Activated naive CD8-positive, alpha-beta T cell treated with anti-CD3 and anti-CD28 coated beads, Interleukin-2, amount 10 ng/mL, durations not matched to agents 7 days and 5 days (primary cell): ENCODE measurements at regions of chr3 and their contacts with region 1.

Region 1: DNA sequence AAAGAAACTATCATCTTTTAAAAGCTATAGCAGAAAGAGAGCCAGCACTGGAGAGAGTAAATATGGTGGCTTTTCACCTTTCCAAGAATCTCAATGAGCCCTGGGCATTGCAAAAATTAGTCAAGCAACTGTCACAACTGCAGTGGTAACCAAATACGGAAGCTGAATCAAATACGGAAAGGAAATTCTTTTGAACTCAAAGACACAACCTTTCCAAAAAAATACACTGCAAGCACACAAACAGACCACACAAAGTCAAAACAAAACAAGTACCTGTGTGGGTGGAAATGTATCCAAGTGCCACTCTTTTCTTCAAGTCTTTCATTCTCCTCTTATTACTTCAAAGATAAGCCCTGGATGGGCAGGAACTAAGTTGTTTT is 17.6 kb downstream of the VGLL4 start:
- DNase-seq: no peak
- ATAC-seq: peak; percentile 12
- H3K4me3 Mint-ChIP-seq: peak overlapping the region; percentile 66
- H3K27ac Mint-ChIP-seq: peak overlapping the region; percentile 78
- H3K4me1 Mint-ChIP-seq: peaks cover 54% of the 10 kb centered on the region
- H3K27me3 Mint-ChIP-seq: no peaks in the 10 kb centered on the region

Region 2: GRCh38 chr3:11410564-11410963 is 215.5 kb before region 1 on chr3:
- POLR2A ChIA-PET with region 1: no interaction called
- DNase-seq: no peak
- ATAC-seq: no peak
- H3K4me3 Mint-ChIP-seq: no peak overlapping the region
- H3K27ac Mint-ChIP-seq: no peak overlapping the region
- H3K4me1 Mint-ChIP-seq: no peaks in the 10 kb centered on the region
- H3K27me3 Mint-ChIP-seq: no peaks in the 10 kb centered on the region

Region 3: DNA sequence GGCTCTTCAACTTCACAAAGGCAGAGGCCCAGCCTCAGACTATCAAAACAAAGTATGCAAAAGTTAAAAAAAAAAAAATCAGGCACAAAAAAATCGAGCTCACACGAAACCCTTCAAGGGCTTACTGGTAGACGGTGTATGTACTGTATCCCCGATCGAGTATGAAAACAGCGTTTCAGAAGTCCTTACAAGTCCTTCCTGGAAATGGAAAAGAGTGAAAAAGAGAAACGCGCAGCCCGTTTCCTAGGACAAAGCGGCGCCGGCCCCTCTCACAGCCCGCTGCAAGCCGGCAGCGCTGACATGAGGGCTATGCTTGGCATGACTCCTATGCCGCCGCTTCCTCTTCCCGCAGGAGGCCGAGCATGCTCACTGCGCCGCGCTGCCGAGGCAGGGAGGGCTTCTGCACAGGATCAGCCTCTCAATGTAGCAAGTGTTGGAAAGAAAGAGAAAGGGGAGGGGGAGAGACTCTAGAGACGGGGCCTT is 17.6 kb after region 1 on chr3 and contains the start of gene VGLL4:
- POLR2A ChIA-PET with region 1: interaction called, 14 read pairs
- DNase-seq: peak; percentile 75
- ATAC-seq: peak; percentile 67
- H3K4me3 Mint-ChIP-seq: peak within 1 kb of the TSS; percentile 93
- H3K27ac Mint-ChIP-seq: peak within 1 kb of the TSS; percentile 96
- H3K4me1 Mint-ChIP-seq: peaks cover 26% of the 10 kb centered on the region
- H3K27me3 Mint-ChIP-seq: peaks cover 6% of the 10 kb centered on the region
- total RNA-seq, gene VGLL4: 33.5 to 37.8 TPM

Region 4: GRCh38 chr3:12081826-12082225 is 455.8 kb after region 1 on chr3:
- POLR2A ChIA-PET with region 1: no interaction called
- DNase-seq: no peak
- ATAC-seq: no peak
- H3K4me3 Mint-ChIP-seq: no peak overlapping the region
- H3K27ac Mint-ChIP-seq: no peak overlapping the region
- H3K4me1 Mint-ChIP-seq: no peaks in the 10 kb centered on the region
- H3K27me3 Mint-ChIP-seq: peaks cover 35% of the 10 kb centered on the region